ENCODE measurements at regions of chr5 and their contacts with region 1.

Region 1: GRCh38 chr5:36619012-36619635 is 12.7 kb downstream of the SLC1A3 start:
- DNase-seq: peak; percentile 64 to 78
- H3K4me3 ChIP-seq: peak overlapping the region in 3 of 4 experiments; percentile 11 to 15 (median 12); a peak in 3 of 8 replicates
- H3K27ac ChIP-seq: peak overlapping the region; percentile 44; the same call in 1 of the 2 replicates
- H3K4me1 ChIP-seq: peaks cover 0 to 18% (median 9%) of the 10 kb centered on the region in 4 experiments; a peak in 5 of 7 replicates
- H3K27me3 ChIP-seq: no peaks in the 10 kb centered on the region
- CTCF ChIP-seq: no peak
- EP300 ChIP-seq: peak in 1 of 2 experiments; percentile 71; a peak in 1 of 3 replicates
- POLR2A ChIP-seq: no peak
- RAD21 ChIP-seq: no peak

Region 2: DNA sequence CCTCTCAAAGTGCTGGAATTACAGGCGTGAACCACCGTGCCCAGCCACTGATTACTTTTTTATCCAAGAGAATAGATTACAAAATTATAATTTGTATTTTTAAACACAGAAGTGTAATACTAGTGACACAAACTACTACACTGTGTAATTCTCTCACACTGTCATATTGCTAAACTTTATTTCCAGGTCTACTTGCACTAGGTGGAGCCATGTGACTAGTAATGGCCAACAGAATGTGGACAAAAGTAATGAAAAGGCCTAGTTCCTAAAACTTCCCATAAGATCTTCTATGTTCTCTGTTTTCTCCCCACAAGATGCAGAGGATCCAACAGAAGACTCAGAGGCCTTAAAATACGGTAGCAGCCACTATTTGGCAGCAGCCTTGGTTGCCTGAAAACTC is 404.7 kb before region 1 on chr5:
- CTCF ChIA-PET with region 1: no interaction called
- POLR2A ChIA-PET with region 1: no interaction called
- DNase-seq: no peak
- H3K4me3 ChIP-seq: no peak overlapping the region
- H3K27ac ChIP-seq: no peak overlapping the region
- H3K4me1 ChIP-seq: no peaks in the 10 kb centered on the region
- H3K27me3 ChIP-seq: no peaks in the 10 kb centered on the region
- CTCF ChIP-seq: no peak; a peak in 1 of 4 replicates
- EP300 ChIP-seq: no peak
- POLR2A ChIP-seq: no peak
- RAD21 ChIP-seq: peak; percentile 47 to 56

Region 3: GRCh38 chr5:36581070-36581469 is 38.1 kb before region 1 on chr5:
- CTCF ChIA-PET with region 1: no interaction called
- POLR2A ChIA-PET with region 1: no interaction called
- DNase-seq: no peak
- H3K4me3 ChIP-seq: no peak overlapping the region
- H3K27ac ChIP-seq: no peak overlapping the region
- H3K4me1 ChIP-seq: peaks cover 0 to 2% (median 0%) of the 10 kb centered on the region in 4 experiments; a peak in 1 of 7 replicates
- H3K27me3 ChIP-seq: no peaks in the 10 kb centered on the region
- CTCF ChIP-seq: no peak
- EP300 ChIP-seq: no peak
- POLR2A ChIP-seq: no peak
- RAD21 ChIP-seq: no peak

Region 4: DNA sequence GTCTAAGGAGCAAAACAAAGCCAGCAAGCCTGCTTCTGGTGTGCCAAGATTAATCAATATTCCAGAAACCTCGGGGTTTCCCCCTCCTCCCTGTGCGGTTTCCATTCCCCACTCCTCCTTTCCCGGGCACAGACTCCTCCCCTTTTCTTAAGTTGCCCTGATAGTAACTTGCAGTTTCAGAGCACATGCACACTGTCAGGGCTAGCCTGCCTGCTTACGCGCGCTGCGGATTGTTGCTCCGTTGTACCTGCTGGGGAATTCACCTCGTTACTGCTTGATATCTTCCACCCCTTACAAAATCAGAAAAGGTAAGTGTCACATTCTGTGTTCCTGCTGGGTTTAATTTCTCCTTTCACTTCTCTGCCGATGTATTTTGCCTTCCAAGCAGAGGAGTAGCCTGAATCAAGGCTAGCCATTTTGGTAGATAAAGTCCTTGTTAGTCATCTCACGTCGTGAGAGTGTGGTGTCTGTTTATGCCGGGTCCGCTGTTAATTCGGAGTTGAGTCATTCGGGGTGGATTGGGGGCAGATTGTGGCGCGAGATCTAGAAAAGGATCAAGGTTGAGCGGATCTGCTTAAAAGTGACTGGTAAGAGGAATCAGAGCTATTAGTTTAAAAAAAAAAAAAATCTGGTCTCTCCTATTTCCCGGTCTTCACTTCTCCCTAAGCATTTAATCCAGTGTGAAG is 12.6 kb before region 1 on chr5 and contains the start of gene SLC1A3:
- CTCF ChIA-PET with region 1: interaction called, 8 read pairs
- POLR2A ChIA-PET with region 1: interaction called, 26 read pairs
- DNase-seq: peak in 1 of 2 experiments; percentile 71
- H3K4me3 ChIP-seq: peak within 1 kb of the TSS; percentile 69 to 74 (median 70)
- H3K27ac ChIP-seq: peak within 1 kb of the TSS; percentile 47; the same call in 1 of the 2 replicates
- H3K4me1 ChIP-seq: peaks cover 5 to 8% (median 6%) of the 10 kb centered on the region in 4 experiments; a peak in 6 of 7 replicates
- H3K27me3 ChIP-seq: no peaks in the 10 kb centered on the region
- CTCF ChIP-seq: no peak
- EP300 ChIP-seq: no peak
- POLR2A ChIP-seq: peak; percentile 84 to 92
- RAD21 ChIP-seq: no peak
- total RNA-seq, gene SLC1A3: 30.6 and 35.3 TPM in 2 replicates

Region 5: GRCh38 chr5:36669015-36669651 is 50.0 kb after region 1 on chr5:
- CTCF ChIA-PET with region 1: no interaction called
- POLR2A ChIA-PET with region 1: no interaction called
- DNase-seq: no peak
- H3K4me3 ChIP-seq: no peak overlapping the region
- H3K27ac ChIP-seq: no peak overlapping the region
- H3K4me1 ChIP-seq: no peaks in the 10 kb centered on the region
- H3K27me3 ChIP-seq: no peaks in the 10 kb centered on the region
- CTCF ChIP-seq: no peak
- EP300 ChIP-seq: no peak
- POLR2A ChIP-seq: no peak
- RAD21 ChIP-seq: no peak

Region 6: DNA sequence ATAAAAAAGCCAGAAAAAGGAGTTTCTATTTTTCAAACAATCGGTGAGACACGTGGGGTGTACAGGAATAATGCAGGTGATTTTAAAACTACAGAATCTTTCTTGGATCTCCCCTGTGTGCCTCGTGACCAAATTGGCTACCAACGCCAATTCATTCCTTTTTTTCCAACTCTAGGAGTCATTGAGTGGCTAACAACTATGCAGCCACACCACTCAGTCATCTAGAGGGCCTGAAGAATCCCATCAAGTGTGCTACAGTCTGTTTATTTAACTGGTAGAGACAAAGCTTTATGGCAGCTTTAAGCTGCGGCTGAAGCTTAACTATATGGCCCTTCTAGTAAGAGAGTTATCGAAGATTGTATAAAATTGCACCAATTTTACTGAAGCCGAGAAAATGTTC is 144.3 kb after region 1 on chr5:
- CTCF ChIA-PET with region 1: no interaction called
- POLR2A ChIA-PET with region 1: no interaction called
- DNase-seq: no peak
- H3K4me3 ChIP-seq: no peak overlapping the region
- H3K27ac ChIP-seq: no peak overlapping the region
- H3K4me1 ChIP-seq: no peaks in the 10 kb centered on the region
- H3K27me3 ChIP-seq: no peaks in the 10 kb centered on the region
- CTCF ChIP-seq: no peak
- EP300 ChIP-seq: no peak
- POLR2A ChIP-seq: no peak
- RAD21 ChIP-seq: no peak